CD8-positive, alpha-beta T cell (primary cell): ENCODE measurements at regions of chrX and their contacts with region 1.

Region 1: DNA sequence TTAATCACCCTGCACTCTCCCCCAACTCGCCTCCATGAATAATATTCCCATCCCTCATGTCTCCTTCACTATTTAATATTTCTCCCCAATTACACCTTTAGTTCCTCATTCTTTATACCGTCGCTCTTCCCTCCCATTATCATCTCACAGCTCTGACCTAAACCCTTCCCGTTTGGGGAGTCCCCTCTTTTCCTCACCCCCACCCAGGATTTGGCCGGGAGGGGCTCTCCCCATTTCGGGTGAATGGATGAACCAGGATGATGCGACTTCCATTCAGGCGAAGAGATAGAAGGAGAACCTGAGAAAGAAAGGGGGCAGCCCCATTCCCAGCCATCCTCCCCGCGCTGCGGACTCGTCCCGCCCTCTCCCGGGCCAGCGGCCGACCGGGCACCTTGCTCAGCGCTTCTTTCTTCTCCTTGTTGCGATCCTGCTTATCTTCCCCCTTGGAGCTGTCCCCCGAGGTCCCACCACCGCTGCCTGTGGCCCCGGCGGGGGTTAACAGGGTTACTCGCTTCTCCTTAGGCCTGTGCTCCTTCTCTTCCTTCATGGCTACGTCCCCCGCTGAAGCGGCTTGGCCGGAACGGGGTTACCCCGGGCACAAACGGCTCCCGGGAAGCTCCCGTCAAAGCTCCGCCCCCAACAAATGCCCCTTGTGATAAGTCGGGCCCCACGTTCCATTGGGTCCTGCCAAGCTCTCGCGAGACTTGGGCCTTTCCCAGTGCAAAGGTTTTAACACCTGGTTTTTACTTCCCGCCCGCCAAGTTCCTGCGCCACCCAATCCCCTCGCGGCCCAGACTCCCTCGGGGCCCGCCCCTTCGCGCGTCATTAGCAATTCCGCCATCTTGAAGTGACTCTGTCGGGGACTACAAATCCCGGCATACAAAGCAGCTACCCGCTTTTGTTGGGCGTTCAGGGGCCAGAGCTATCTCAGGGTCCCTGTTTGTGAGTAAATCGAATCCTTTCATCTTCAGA is at the start of gene UPF3B:
- DNase-seq: peak; percentile 82 to 98 (median 92)
- ATAC-seq: peak; percentile 97
- H3K4me3 ChIP-seq: peak within 1 kb of the TSS; percentile 95 to 96
- H3K4me3 Mint-ChIP-seq: peak within 1 kb of the TSS; percentile 99
- H3K27ac ChIP-seq: peak within 1 kb of the TSS; percentile 87 to 97
- H3K27ac Mint-ChIP-seq: peak within 1 kb of the TSS; percentile 98
- H3K4me1 ChIP-seq: peaks cover 7% of the 10 kb centered on the region
- H3K4me1 Mint-ChIP-seq: peaks cover 18% of the 10 kb centered on the region
- H3K27me3 ChIP-seq: no peaks in the 10 kb centered on the region
- H3K27me3 Mint-ChIP-seq: no peaks in the 10 kb centered on the region
- CTCF ChIP-seq: no peak
- total RNA-seq, gene UPF3B: 5.6 to 8.4 TPM

Region 2: DNA sequence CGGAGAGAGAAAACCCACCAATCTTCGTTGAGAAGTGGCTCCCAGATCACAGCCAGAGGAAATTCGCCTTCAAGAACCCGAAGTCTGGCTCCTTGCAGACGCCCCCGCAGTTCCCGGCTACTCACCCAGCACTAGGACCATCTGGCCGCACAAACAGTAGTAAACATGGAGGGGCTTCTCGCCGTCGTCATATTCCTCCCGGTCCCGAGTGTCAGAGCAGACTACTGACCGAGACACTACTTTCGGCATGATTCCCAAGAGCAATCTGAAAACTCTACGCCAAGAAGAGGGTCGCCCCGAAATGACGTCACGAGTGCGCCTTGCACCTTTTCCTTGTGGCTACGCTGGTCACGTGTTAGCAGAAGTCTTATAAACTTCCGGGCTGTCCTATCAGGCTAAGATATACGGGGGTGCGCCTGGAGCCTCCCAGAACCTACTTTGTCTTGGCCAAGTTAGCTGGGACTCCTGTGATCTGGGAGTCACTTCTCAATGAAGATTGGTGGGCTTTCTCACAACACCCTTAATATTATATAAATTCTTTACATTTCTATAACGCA is 287.5 kb before region 1 on chrX and contains the start of gene STEEP1:
- CTCF ChIA-PET with region 1: no interaction called
- POLR2A ChIA-PET with region 1: no interaction called
- intact Hi-C with region 1: loop called in 1 of 2 experiments (anchors 5 kb)
- DNase-seq: peak; percentile 65 to 94 (median 87)
- ATAC-seq: peak; percentile 94
- H3K4me3 ChIP-seq: peak within 1 kb of the TSS; percentile 72 to 80
- H3K4me3 Mint-ChIP-seq: peak within 1 kb of the TSS; percentile 96
- H3K27ac ChIP-seq: peak within 1 kb of the TSS; percentile 77 to 78
- H3K27ac Mint-ChIP-seq: peak within 1 kb of the TSS; percentile 96
- H3K4me1 ChIP-seq: peaks cover 3% of the 10 kb centered on the region
- H3K4me1 Mint-ChIP-seq: peaks cover 22% of the 10 kb centered on the region
- H3K27me3 ChIP-seq: no peaks in the 10 kb centered on the region
- H3K27me3 Mint-ChIP-seq: no peaks in the 10 kb centered on the region
- CTCF ChIP-seq: no peak
- total RNA-seq, gene STEEP1: 33.6 to 34.5 TPM

Region 3: DNA sequence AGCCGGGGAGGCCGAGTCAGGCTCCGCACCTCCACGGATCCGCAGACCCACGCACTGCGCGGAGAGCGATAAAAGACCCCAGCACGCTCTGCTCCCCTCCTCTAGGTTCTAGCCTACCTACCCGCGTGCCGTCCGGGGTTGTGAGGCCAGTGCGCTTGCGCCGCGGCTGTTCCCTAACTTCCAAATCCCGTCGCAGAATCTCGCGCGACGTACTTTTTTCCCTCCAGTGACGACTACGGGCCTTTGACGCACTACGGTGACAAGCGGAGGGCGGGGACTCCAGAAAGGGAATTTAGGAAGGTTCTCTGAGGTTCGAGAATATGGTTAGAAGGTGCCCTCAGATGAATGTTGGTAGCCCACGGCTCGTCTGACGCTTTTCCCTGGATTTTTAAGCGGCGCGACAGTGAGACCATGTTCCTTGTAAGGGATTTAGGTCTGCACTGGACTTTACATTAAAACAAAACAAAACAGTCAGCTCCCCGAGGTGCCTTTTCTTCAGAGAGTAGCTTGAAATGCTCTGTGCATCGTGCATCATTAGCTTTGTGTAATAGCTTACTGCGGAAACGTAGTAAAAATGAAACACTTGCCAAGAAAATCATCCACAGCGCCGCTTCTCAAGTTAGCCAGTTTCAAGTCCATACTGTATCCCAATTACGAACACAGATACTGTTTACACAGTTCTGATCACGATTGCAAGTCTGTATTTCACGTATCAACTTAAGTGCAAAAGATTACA is 246.2 kb before region 1 on chrX and contains the start of gene NKRF:
- CTCF ChIA-PET with region 1: no interaction called
- POLR2A ChIA-PET with region 1: no interaction called
- intact Hi-C with region 1: loop called in 1 of 2 experiments (anchors 10 kb)
- DNase-seq: peak; percentile 79 to 96 (median 88)
- ATAC-seq: peak; percentile 76
- H3K4me3 ChIP-seq: peak within 1 kb of the TSS; percentile 89 to 90
- H3K4me3 Mint-ChIP-seq: peak within 1 kb of the TSS; percentile 87
- H3K27ac ChIP-seq: peak within 1 kb of the TSS; percentile 94 to 96
- H3K27ac Mint-ChIP-seq: peak within 1 kb of the TSS; percentile 97
- H3K4me1 ChIP-seq: peaks cover 7% of the 10 kb centered on the region
- H3K4me1 Mint-ChIP-seq: peaks cover 39% of the 10 kb centered on the region
- H3K27me3 ChIP-seq: no peaks in the 10 kb centered on the region
- H3K27me3 Mint-ChIP-seq: no peaks in the 10 kb centered on the region
- CTCF ChIP-seq: no peak
- total RNA-seq, gene NKRF: 18.3 to 20.5 TPM

Region 4: GRCh38 chrX:119791438-119792231 is 61.0 kb before region 1 on chrX and contains the start of gene RPL39:
- CTCF ChIA-PET with region 1: interaction called, 3 read pairs
- POLR2A ChIA-PET with region 1: interaction called, 10 read pairs
- intact Hi-C with region 1: loop called (anchors 1 to 5 kb)
- DNase-seq: peak; percentile 57 to 93 (median 78)
- ATAC-seq: peak; percentile 90
- H3K4me3 ChIP-seq: peak within 1 kb of the TSS; percentile 84 to 97
- H3K4me3 Mint-ChIP-seq: peak within 1 kb of the TSS; percentile 97
- H3K27ac ChIP-seq: peak within 1 kb of the TSS; percentile 88 to 98
- H3K27ac Mint-ChIP-seq: peak within 1 kb of the TSS; percentile 98
- H3K4me1 ChIP-seq: peaks cover 31% of the 10 kb centered on the region
- H3K4me1 Mint-ChIP-seq: peaks cover 44% of the 10 kb centered on the region
- H3K27me3 ChIP-seq: no peaks in the 10 kb centered on the region
- H3K27me3 Mint-ChIP-seq: no peaks in the 10 kb centered on the region
- CTCF ChIP-seq: no peak
- total RNA-seq, gene RPL39: 4,125 to 4,338 TPM

Region 5: GRCh38 chrX:119880552-119881437 is 28.1 kb after region 1 on chrX:
- CTCF ChIA-PET with region 1: no interaction called
- POLR2A ChIA-PET with region 1: interaction called, 3 read pairs
- intact Hi-C with region 1: loop called in 1 of 2 experiments (anchors 5 kb)
- DNase-seq: peak in 5 of 9 experiments; percentile 19 to 73 (median 39)
- ATAC-seq: peak; percentile 84
- H3K4me3 ChIP-seq: no peak overlapping the region
- H3K4me3 Mint-ChIP-seq: no peak overlapping the region
- H3K27ac ChIP-seq: no peak overlapping the region
- H3K27ac Mint-ChIP-seq: peak overlapping the region; percentile 81
- H3K4me1 ChIP-seq: peaks cover 5% of the 10 kb centered on the region
- H3K4me1 Mint-ChIP-seq: peaks cover 26% of the 10 kb centered on the region
- H3K27me3 ChIP-seq: no peaks in the 10 kb centered on the region
- H3K27me3 Mint-ChIP-seq: no peaks in the 10 kb centered on the region
- CTCF ChIP-seq: peak; percentile 51

Region 6: DNA sequence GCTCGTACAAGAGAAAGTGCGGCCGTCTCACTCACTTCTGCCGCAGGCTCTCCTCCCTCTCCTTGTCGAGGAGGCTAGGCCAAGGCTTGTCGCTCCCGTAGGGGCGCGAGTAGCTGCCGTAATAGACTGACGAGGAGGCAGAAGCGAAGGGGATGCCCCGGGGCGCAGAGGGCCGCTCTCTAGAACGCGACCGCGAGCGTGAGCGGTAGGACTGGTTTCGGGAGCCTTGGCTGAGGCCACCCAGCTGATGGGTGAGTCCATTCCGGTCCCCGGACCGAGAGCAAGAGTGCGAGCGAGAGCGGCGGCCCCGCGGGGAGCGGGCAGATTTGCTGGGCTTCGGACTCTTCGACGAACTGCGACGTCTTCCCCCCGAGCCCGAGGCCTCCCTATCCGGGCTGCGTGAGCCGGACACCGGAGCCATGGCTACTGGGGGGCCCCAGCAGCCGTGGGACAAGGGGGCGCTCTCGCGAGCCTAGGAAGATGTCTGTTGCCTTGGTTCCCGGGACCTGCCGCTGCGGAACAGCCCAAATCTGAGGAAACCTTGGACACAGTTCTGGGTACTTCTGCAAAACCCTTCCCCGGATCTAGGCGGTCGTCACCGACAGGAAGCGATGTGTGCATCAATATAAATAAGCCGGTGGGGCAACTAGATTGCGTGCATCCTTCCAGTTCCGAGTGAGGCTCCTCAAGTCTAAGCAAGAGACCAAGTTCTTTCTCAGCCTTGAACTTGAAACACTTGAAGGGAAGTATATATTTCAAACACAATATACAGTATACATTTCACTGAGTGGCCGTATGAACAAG is 90.7 kb after region 1 on chrX and contains the start of gene NKAP:
- CTCF ChIA-PET with region 1: no interaction called
- POLR2A ChIA-PET with region 1: no interaction called
- intact Hi-C with region 1: loop called in 1 of 2 experiments (anchors 1 kb)
- DNase-seq: peak; percentile 59 to 90 (median 78)
- ATAC-seq: peak; percentile 82
- H3K4me3 ChIP-seq: peak within 1 kb of the TSS; percentile 94
- H3K4me3 Mint-ChIP-seq: peak within 1 kb of the TSS; percentile 97
- H3K27ac ChIP-seq: peak within 1 kb of the TSS; percentile 91 to 93
- H3K27ac Mint-ChIP-seq: peak within 1 kb of the TSS; percentile 97
- H3K4me1 ChIP-seq: peaks cover 18% of the 10 kb centered on the region
- H3K4me1 Mint-ChIP-seq: peaks cover 24% of the 10 kb centered on the region
- H3K27me3 ChIP-seq: no peaks in the 10 kb centered on the region
- H3K27me3 Mint-ChIP-seq: peaks cover under 1% of the 10 kb centered on the region
- CTCF ChIP-seq: no peak
- total RNA-seq, gene NKAP: 17.4 to 20.1 TPM